MCF 10A (cell line): ENCODE measurements at regions of chr1 and their contacts with region 1.

Region 1: DNA sequence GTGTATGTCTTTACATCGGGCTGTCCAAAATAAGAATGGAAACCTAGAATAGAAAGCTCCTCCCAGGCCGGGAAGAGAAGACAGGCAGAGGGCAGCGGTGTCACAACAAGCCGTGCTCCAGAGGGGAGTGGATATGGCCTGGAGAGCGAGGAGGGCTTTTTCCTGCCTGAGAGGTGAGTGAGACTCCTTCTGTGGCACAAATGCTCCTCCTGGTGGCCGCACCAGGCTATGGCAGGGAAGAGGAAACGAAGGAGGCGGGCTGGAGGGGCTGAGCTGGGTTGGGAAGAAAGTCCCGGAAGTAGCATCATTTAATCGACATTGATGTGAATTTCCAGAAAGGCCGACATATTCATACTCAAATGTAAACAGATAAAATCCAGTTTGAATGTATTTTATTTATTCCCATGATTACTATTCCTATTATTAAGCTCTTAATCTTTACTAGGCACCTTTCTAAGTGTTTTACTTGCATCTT is 54.7 kb downstream of the MEF2D start:
- DNase-seq: peak; percentile 91
- H3K4me3 Mint-ChIP-seq: no peak overlapping the region
- H3K27ac Mint-ChIP-seq: no peak overlapping the region
- H3K4me1 Mint-ChIP-seq: no peaks in the 10 kb centered on the region
- H3K27me3 Mint-ChIP-seq: peaks cover 24% of the 10 kb centered on the region
- CTCF ChIP-seq: peak; percentile 99

Region 2: DNA sequence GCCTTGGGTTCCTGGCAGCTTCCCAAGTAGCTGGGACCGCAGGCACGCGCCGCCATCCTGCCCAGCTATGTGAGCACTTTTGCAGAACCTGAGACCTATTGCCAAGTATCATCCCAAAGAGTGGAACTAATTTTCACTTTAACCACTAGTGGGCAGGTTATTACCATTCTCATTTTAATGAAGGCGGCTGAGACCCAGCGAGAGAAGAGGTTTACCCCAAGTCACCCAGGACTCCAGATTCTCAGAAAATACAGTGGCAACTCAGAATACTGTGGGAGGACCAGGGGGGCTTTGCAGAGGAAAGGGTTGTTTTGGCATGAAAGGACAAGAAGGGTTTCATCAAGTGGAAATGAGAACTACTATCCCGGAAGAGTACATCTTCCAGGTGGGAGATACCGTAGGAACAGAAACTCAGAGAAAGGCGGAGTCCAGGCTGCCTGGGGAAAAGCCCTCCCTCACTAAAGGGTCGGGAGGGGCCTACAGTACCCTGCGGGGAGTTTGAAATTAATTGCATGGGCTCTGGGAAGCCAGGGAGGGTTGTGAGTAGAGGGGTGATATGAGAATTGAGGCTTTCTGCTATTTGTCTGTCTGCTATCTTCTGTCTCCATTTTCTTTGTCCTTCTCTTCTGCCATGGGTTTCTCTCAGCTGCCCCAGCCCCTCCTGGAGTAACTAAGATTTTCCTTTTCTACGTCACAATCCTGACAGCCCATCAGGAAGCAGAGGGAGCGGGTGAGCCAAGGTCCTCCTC is 299.6 kb before region 1 on chr1:
- CTCF ChIA-PET with region 1: no interaction called
- POLR2A ChIA-PET with region 1: no interaction called
- intact Hi-C with region 1: loop called (anchors 2 kb)
- DNase-seq: peak; percentile 97
- H3K4me3 Mint-ChIP-seq: peak overlapping the region; percentile 24
- H3K27ac Mint-ChIP-seq: no peak overlapping the region
- H3K4me1 Mint-ChIP-seq: peaks cover 29% of the 10 kb centered on the region
- H3K27me3 Mint-ChIP-seq: no peaks in the 10 kb centered on the region
- CTCF ChIP-seq: peak; percentile 60

Region 3: GRCh38 chr1:156388174-156389137 is 57.4 kb before region 1 on chr1:
- CTCF ChIA-PET with region 1: interaction called, 452 read pairs
- POLR2A ChIA-PET with region 1: interaction called, 13 read pairs
- intact Hi-C with region 1: loop called (anchors 1 kb)
- DNase-seq: no peak
- H3K4me3 Mint-ChIP-seq: no peak overlapping the region
- H3K27ac Mint-ChIP-seq: no peak overlapping the region
- H3K4me1 Mint-ChIP-seq: peaks cover 11% of the 10 kb centered on the region
- H3K27me3 Mint-ChIP-seq: no peaks in the 10 kb centered on the region
- CTCF ChIP-seq: no peak

Region 4: DNA sequence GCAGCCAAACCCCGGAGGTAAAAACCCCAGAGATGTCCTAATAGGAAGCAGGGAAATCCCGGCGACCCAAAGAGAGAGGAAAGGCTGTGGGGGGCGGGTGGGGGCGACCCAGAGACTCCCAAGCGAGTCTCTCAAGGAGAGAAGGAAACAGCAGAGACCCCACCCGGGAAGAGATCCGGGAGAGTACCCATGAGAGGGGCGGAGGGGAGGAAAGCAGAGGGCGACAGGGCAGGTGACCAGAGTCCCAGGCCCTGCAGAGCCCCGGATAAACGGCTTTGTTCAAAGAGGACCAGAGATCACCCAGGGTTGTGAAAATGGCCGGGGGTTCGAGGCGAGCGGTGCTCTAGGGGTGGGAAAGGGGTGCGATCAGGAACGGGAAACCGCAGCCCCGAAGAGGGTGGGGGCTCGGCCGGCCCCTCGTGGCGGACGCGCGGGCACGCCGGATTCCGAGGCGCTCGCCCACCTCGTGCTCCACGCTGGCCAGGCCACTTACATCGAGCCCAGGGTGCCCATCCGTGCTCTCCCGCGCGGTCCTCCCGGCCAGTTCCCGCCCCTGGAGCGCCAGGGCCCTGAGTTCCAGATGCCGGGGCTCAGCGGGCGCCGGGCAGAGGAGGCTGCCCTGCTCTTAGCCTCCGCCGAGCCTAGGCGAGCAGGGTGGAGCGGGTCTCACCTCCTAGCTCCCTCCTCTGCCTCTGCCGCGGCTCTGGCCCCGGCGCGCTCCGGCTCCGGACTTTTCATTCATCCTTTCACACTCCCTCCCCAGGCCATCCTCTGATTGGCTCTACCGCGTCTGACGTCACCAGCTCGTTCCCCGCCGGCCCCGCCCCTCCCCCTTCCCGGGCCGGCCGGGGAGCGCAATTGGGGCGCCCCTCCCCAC is 24.5 kb before region 1 on chr1:
- CTCF ChIA-PET with region 1: interaction called, 26 read pairs
- POLR2A ChIA-PET with region 1: no interaction called
- intact Hi-C with region 1: no loop called
- DNase-seq: peak; percentile 93
- H3K4me3 Mint-ChIP-seq: peak overlapping the region; percentile 71
- H3K27ac Mint-ChIP-seq: no peak overlapping the region
- H3K4me1 Mint-ChIP-seq: peaks cover 5% of the 10 kb centered on the region
- H3K27me3 Mint-ChIP-seq: peaks cover 90% of the 10 kb centered on the region
- CTCF ChIP-seq: no peak

Region 5: DNA sequence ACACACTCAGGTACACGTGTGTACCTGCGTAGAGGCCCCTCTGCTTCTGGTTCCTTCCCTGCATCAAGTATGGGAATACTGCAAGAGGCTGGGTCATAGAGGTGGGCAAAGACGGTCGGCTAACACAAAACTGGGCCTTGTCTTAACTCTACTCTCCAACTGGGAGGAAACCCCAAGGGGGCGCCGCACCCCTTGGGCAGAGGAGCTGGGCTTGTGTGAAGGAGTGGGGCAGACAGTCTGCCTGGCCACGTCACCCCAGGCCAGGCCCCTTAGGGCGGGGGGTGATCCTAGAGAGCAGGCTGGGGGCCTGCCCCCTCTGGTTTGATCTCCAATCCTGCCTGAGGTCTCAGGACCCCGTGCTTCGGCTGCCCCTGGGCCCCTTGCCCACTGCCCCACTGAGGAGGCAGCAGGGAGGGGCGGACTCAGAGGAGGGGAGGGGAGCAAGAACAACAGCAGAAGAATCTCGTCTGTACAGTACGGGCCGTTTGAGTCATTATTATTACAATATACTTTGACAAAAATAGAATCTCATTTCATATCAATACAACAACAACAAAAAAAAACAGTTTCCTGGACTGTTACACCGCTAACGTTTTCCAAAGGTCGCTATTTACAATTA is 20.0 kb after region 1 on chr1:
- CTCF ChIA-PET with region 1: interaction called, 10 read pairs
- POLR2A ChIA-PET with region 1: interaction called, 3 read pairs
- intact Hi-C with region 1: no loop called
- DNase-seq: peak; percentile 57
- H3K4me3 Mint-ChIP-seq: peak overlapping the region; percentile 59
- H3K27ac Mint-ChIP-seq: peak overlapping the region; percentile 82
- H3K4me1 Mint-ChIP-seq: peaks cover 58% of the 10 kb centered on the region
- H3K27me3 Mint-ChIP-seq: no peaks in the 10 kb centered on the region
- CTCF ChIP-seq: peak; percentile 31

Region 6: GRCh38 chr1:156601122-156601830 is 155.4 kb after region 1 on chr1 and contains the start of gene GPATCH4:
- CTCF ChIA-PET with region 1: interaction called, 15 read pairs
- POLR2A ChIA-PET with region 1: interaction called, 3 read pairs
- intact Hi-C with region 1: no loop called
- DNase-seq: peak; percentile 94
- H3K4me3 Mint-ChIP-seq: peak within 1 kb of the TSS; percentile 86
- H3K27ac Mint-ChIP-seq: peak within 1 kb of the TSS; percentile 94
- H3K4me1 Mint-ChIP-seq: peaks cover 18% of the 10 kb centered on the region
- H3K27me3 Mint-ChIP-seq: no peaks in the 10 kb centered on the region
- CTCF ChIP-seq: no peak
- total RNA-seq, gene GPATCH4: 67.3 and 107 TPM in 2 replicates

Region 7: GRCh38 chr1:156641761-156642264 is 196.0 kb after region 1 on chr1 and contains the start of gene BCAN:
- CTCF ChIA-PET with region 1: interaction called, 10 read pairs
- POLR2A ChIA-PET with region 1: no interaction called
- intact Hi-C with region 1: no loop called
- DNase-seq: no peak
- H3K4me3 Mint-ChIP-seq: no peak within 1 kb of the TSS
- H3K27ac Mint-ChIP-seq: no peak within 1 kb of the TSS
- H3K4me1 Mint-ChIP-seq: peaks cover 15% of the 10 kb centered on the region
- H3K27me3 Mint-ChIP-seq: peaks cover 36% of the 10 kb centered on the region
- CTCF ChIP-seq: no peak
- total RNA-seq, gene BCAN: 0.37 TPM in 1 of 2 replicates, not detected in the other